ENCODE measurements at regions of chr19 and their contacts with region 1.

Region 1: GRCh38 chr19:10946964-10947657 is 13.7 kb upstream of the SMARCA4 start:
- DNase-seq: no peak
- H3K4me3 ChIP-seq: no peak overlapping the region
- H3K27ac ChIP-seq: no peak overlapping the region
- H3K4me1 ChIP-seq: peaks cover 0 to 4% (median 3%) of the 10 kb centered on the region in 4 donors
- H3K27me3 ChIP-seq: no peaks in the 10 kb centered on the region
- CTCF ChIP-seq: no peak
- EP300 ChIP-seq: no peak
- POLR2A ChIP-seq: no peak

Region 2: GRCh38 chr19:10986261-10987127 is 39.4 kb after region 1 on chr19:
- intact Hi-C with region 1: no loop called
- DNase-seq: no peak
- H3K4me3 ChIP-seq: no peak overlapping the region
- H3K27ac ChIP-seq: no peak overlapping the region
- H3K4me1 ChIP-seq: peaks cover 0 to 7% (median 2%) of the 10 kb centered on the region in 4 donors
- H3K27me3 ChIP-seq: no peaks in the 10 kb centered on the region
- CTCF ChIP-seq: no peak
- EP300 ChIP-seq: no peak
- POLR2A ChIP-seq: no peak

Region 3: DNA sequence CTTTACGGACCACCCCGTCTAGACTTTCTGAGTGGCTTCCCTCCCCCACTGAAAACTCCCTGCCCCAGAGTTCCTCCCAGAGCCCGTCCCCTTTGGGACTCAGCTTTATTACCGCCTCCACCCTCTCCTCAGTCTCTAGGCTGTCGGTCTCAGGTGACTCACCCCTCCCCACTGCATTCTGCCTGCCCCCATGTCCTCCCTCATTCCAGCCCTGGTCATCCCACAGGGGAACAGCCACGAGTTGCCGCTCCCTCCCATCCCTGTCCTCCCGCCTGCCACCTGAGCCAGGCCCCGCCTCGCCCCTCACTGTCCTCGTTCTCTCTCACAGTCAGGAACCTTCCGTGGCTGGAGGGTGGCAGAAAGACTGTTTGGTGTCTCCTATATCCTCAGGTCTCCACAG is 71.1 kb after region 1 on chr19:
- intact Hi-C with region 1: loop called (anchors 10 kb)
- DNase-seq: no peak
- H3K4me3 ChIP-seq: no peak overlapping the region
- H3K27ac ChIP-seq: no peak overlapping the region
- H3K4me1 ChIP-seq: no peaks in the 10 kb centered on the region
- H3K27me3 ChIP-seq: no peaks in the 10 kb centered on the region
- CTCF ChIP-seq: no peak
- EP300 ChIP-seq: no peak
- POLR2A ChIP-seq: no peak

Measured in esophagus muscularis mucosa (tissue), 4 donors.